CD4-positive, alpha-beta memory T cell (primary cell): ENCODE measurements at regions of chr11 and their contacts with region 1.

Region 1: GRCh38 chr11:3905080-3905953 is 49.9 kb downstream of the STIM1 start:
- DNase-seq: peak; percentile 62 to 89 (median 77)
- H3K4me3 ChIP-seq: no peak overlapping the region
- H3K4me3 Mint-ChIP-seq: peak overlapping the region in 7 of 8 donors; percentile 8 to 67 (median 40)
- H3K27ac ChIP-seq: peak overlapping the region; percentile 45
- H3K27ac Mint-ChIP-seq: peak overlapping the region; percentile 75 to 95 (median 93)
- H3K4me1 ChIP-seq: peaks cover 84% of the 10 kb centered on the region
- H3K4me1 Mint-ChIP-seq: peaks cover 66 to 90% (median 81%) of the 10 kb centered on the region in 4 donors
- H3K27me3 ChIP-seq: no peaks in the 10 kb centered on the region
- H3K27me3 Mint-ChIP-seq: no peaks in the 10 kb centered on the region

Region 2: GRCh38 chr11:3867209-3868091 is 37.9 kb before region 1 on chr11:
- CTCF ChIA-PET with region 1: no interaction called
- POLR2A ChIA-PET with region 1: no interaction called
- intact Hi-C with region 1: loop called (anchors 5 kb)
- DNase-seq: no peak
- H3K4me3 ChIP-seq: no peak overlapping the region
- H3K4me3 Mint-ChIP-seq: peak overlapping the region in 7 of 8 donors; percentile 17 to 70 (median 24)
- H3K27ac ChIP-seq: no peak overlapping the region
- H3K27ac Mint-ChIP-seq: peak overlapping the region; percentile 60 to 93 (median 87)
- H3K4me1 ChIP-seq: peaks cover 88% of the 10 kb centered on the region
- H3K4me1 Mint-ChIP-seq: peaks cover 63 to 97% (median 83%) of the 10 kb centered on the region in 4 donors
- H3K27me3 ChIP-seq: no peaks in the 10 kb centered on the region
- H3K27me3 Mint-ChIP-seq: no peaks in the 10 kb centered on the region